Right ventricle myocardium superior (tissue), 1 donor: ENCODE measurements at regions of chr10 and their contacts with region 1.

Region 1: DNA sequence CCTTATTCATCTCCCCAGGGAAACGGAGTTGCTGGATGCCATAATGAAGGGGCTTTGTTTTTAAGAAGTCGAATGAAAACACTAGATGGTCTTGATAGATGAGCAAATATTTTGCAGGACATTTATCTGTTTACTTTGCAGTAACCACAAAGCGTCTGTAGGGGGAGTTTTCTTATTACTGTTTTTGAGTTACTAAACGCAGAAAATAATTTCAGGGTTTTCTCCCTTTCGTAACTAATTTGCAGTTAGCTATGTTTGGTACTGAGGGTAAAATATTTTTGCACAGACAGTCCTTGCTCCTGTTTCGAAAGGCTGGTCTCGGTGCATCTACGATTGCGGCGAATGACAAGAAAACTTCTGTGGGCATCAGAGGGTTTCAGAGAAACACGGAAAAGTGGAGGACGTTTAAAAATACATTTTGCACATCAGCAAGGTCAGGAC is 505.6 kb upstream of the MKI67 start:
- DNase-seq: no peak
- ATAC-seq: peak; percentile 20

Region 2: DNA sequence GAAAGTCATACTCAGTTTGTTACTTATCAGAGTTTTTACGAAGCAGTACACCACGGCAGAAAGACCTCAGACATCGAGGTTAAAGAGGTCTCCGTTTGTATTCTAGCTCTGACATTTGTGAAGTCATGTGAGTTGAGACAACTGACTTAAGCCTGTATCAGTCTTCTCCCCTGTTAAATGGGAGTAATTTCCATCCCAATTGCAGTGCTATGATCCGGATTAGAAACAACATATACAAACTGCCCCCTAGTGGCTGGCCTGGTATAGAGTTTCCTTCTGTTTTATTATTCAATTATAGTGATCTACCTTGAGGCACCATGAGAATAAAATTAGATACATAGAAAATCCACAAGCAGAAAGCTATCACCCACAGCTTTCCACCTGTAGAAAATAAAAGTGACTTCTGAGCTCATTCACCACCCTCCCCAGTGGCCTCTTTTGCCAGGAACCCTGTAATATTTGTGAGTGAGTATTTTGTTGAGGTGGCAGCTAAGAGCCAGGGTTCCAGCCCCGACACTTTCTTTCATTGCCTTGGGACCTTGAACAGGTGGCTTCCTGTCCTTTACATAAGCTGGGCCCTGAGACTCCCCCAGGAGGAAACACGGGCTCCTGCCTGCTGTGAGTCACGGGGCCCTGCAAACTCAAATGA is 228.0 kb after region 1 on chr10:
- intact Hi-C with region 1: loop called (anchors 10 kb)
- DNase-seq: no peak
- ATAC-seq: no peak